A673 (cell line): ENCODE measurements at regions of chr6 and their contacts with region 1.

Region 1: DNA sequence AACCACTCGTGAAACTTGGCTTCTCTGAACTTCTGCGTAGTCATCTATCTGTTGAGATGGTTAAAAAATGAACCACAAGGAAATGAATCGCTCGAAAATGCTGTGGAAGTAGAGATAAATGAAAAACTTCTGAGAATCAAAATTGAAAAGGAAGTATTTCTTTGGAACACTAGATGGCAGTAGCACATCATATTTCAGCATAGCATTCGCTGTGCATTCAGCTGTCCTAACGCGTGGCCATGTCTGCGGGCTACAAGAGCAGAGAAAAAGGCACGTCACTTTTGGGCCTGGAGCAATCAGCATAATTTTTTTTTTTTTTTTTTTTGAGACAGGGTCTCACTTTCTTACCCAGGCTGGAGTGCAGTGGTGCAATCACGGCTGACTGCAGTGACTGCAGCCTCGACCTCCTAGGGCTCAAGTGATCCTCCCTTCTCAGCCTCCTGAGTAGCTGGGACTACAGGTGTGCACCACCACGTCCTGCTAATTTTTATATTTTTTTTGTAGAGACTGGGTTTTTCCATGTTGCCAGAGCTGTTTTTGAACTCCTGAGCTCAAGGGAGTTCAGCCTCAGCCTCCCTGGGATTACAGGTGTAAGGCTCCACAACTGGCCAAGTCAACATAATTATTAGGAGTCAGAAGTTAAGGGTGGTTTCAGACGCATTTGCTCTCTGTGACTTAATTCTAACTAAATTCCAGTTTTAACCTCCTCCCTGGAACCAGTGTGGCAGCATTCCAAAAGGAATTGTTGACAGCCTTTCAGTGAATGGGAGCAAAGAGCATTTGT is 8.8 kb upstream of the PERP start:
- DNase-seq: peak; percentile 77
- H3K4me3 ChIP-seq: no peak overlapping the region
- H3K27ac ChIP-seq: no peak overlapping the region
- H3K4me1 ChIP-seq: no peaks in the 10 kb centered on the region
- H3K27me3 ChIP-seq: no peaks in the 10 kb centered on the region
- CTCF ChIP-seq: peak; percentile 70

Region 2: GRCh38 chr6:138278326-138278725 is 162.3 kb after region 1 on chr6:
- CTCF ChIA-PET with region 1: interaction called, 15 read pairs
- POLR2A ChIA-PET with region 1: no interaction called
- intact Hi-C with region 1: loop called (anchors 1 kb)
- DNase-seq: peak; percentile 63
- H3K4me3 ChIP-seq: no peak overlapping the region
- H3K27ac ChIP-seq: no peak overlapping the region
- H3K4me1 ChIP-seq: no peaks in the 10 kb centered on the region
- H3K27me3 ChIP-seq: no peaks in the 10 kb centered on the region
- CTCF ChIP-seq: peak; percentile 60

Region 3: DNA sequence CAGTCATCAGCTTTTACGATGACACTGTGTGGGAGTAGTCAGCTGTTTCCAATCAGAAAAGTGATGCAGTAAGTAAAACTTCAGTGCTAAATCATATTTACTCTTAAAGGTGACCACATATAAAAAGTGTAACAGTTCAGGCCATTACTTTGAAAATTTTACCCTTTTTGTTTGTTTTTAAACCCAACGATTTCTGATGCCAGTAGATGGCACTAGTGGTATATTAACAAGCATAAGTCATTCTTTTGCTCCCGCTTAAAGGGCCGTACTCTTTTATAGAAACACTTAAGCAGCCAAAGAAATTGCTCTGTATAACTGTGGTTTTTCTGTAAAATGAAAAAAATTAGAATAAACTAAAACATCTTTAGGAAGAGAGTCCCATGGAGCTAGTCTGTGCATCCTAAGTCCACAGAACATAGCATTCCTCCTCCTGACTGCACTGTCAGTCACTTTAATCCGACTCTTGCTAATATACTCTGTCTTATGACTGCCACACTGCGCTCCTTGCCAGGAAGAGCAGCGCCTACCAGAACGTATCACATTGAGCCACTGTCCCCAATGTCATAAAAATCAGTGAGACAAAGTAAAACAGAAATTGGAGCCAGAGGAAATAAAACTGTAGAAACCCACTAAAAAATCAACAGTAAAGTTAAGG is 313.0 kb after region 1 on chr6:
- CTCF ChIA-PET with region 1: no interaction called
- POLR2A ChIA-PET with region 1: no interaction called
- intact Hi-C with region 1: loop called (anchors 2 kb)
- DNase-seq: peak; percentile 70
- H3K4me3 ChIP-seq: no peak overlapping the region
- H3K27ac ChIP-seq: no peak overlapping the region
- H3K4me1 ChIP-seq: no peaks in the 10 kb centered on the region
- H3K27me3 ChIP-seq: no peaks in the 10 kb centered on the region
- CTCF ChIP-seq: peak; percentile 74

Region 4: GRCh38 chr6:138588805-138589434 is 472.9 kb after region 1 on chr6:
- CTCF ChIA-PET with region 1: no interaction called
- POLR2A ChIA-PET with region 1: no interaction called
- intact Hi-C with region 1: loop called (anchors 2 kb)
- DNase-seq: peak; percentile 89
- H3K4me3 ChIP-seq: no peak overlapping the region
- H3K27ac ChIP-seq: no peak overlapping the region
- H3K4me1 ChIP-seq: peaks cover 14% of the 10 kb centered on the region
- H3K27me3 ChIP-seq: no peaks in the 10 kb centered on the region
- CTCF ChIP-seq: peak; percentile 92

Region 5: DNA sequence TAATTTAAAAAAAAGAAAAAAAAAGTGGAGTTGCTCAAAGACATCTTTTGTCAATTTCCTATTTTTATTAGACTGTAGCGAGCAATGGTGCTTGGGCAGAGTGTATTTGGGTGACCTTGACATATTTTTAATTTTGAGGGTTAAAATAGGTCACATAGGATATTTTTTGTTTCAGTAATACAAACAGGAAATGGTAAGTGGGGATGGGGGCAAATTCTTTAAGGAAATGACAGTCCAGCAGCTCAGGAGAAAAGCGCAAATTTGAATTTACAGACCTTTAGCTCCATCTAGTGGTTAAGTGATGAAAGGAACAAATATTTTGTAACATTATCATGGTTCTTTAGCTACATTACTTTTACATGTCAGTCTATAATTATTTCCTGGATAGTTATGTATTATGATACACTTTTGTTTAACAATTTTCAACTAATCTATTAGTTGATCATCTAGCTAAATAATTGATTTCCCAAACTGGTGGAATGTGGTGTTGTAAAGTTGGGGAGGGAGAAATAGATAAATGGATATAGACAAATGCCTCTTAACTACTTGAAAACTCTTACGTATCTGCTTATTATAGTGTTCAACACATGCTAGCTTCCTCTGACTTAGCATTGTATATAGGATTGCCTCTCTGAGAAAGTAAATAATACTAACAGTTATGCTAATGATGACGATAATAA is 1248.4 kb after region 1 on chr6:
- CTCF ChIA-PET with region 1: no interaction called
- POLR2A ChIA-PET with region 1: no interaction called
- intact Hi-C with region 1: loop called (anchors 2 kb)
- DNase-seq: peak; percentile 85
- H3K4me3 ChIP-seq: no peak overlapping the region
- H3K27ac ChIP-seq: peak overlapping the region; percentile 31
- H3K4me1 ChIP-seq: peaks cover 32% of the 10 kb centered on the region
- H3K27me3 ChIP-seq: no peaks in the 10 kb centered on the region
- CTCF ChIP-seq: peak; percentile 66